CD8-positive, alpha-beta T cell (primary cell): ENCODE measurements at regions of chr6 and their contacts with region 1.

Region 1: DNA sequence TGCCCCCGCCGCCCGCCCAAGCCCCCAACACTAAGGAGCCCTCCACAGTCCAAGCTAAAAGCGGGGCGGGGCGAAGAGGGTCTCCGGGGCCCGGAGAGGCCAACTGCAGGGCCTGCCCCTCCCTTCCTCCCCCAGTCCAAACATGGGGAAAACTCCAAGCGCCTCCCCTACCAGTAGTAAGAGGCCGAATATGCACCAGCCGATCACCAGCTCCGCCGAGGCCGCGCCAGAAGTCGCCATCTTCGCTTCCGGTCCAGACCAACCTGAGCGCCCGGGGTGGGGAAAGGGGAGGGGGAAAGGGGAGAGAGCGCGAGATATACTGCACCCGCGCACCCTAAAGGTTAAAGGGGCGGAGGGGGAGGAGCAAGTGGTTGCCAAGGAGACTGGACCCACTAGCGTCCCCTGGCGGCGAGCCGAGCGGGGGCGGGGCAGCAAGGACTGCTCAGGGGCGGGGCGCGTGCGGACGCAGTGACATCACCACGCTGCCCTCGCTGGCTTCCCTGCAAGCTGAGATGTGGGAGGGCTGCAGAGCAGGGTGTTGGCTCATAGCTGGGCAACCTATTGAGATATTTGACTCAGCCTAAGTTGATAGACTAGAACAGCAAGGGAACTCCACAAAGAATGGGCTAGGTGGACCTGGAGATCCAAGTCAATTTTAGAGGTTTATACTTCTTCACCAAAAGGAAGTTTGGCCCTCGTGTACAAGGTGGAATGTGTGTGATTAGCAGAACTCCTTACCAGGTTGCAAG is at the start of gene LMBRD1:
- DNase-seq: peak; percentile 98 to 100 (median 99)
- ATAC-seq: peak; percentile 77
- H3K4me3 ChIP-seq: peak within 1 kb of the TSS; percentile 61 to 90
- H3K4me3 Mint-ChIP-seq: peak within 1 kb of the TSS; percentile 98
- H3K27ac ChIP-seq: peak within 1 kb of the TSS; percentile 92 to 93
- H3K27ac Mint-ChIP-seq: peak within 1 kb of the TSS; percentile 99
- H3K4me1 ChIP-seq: peaks cover 17% of the 10 kb centered on the region
- H3K4me1 Mint-ChIP-seq: peaks cover 56% of the 10 kb centered on the region
- H3K27me3 ChIP-seq: no peaks in the 10 kb centered on the region
- H3K27me3 Mint-ChIP-seq: no peaks in the 10 kb centered on the region
- CTCF ChIP-seq: peak; percentile 94
- total RNA-seq, gene LMBRD1: 39.2 to 40.3 TPM

Region 2: DNA sequence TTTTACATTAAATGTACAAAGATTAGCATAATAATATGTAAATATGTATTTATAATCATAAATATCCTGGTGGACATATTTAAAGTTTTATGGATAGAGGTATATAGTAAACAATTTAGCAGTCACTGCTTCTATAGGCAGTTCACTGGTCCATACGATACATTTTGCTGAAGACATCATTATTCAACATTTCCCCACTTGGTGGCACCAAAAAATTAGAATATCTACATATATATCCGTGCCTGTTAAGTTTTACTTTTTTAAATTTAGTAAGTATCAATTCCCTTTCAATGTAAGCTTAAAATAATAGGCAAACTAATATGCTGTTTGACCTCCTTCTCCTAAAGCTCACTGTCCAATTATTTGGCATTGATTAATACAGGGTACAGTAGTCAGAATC is 64.2 kb before region 1 on chr6:
- CTCF ChIA-PET with region 1: interaction called, 3 read pairs
- POLR2A ChIA-PET with region 1: no interaction called
- intact Hi-C with region 1: loop called in 1 of 2 experiments (anchors 5 kb)
- DNase-seq: peak in 2 of 9 experiments; percentile 15 to 30
- ATAC-seq: no peak
- H3K4me3 ChIP-seq: no peak overlapping the region
- H3K4me3 Mint-ChIP-seq: no peak overlapping the region
- H3K27ac ChIP-seq: no peak overlapping the region
- H3K27ac Mint-ChIP-seq: no peak overlapping the region
- H3K4me1 ChIP-seq: no peaks in the 10 kb centered on the region
- H3K4me1 Mint-ChIP-seq: no peaks in the 10 kb centered on the region
- H3K27me3 ChIP-seq: no peaks in the 10 kb centered on the region
- H3K27me3 Mint-ChIP-seq: no peaks in the 10 kb centered on the region
- CTCF ChIP-seq: peak; percentile 26

Region 3: DNA sequence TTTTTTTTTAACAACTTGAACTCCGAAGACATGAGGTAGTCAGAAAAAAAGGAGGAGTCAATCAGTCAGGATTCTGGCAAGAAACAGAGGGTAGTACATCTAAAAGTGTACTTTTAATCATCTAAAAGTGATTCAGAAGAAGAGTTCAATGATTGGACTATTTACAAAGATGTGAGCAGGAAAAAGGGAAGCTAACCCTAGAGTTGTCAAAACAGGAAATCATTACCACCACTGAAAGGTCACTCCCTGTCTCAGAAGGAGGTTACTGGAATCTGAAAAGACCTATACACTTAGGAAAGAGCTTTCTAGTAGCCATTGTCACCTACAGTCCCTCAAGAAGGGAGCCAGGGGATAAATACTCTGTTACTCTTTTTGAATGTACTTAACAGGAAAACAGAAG is 16.7 kb after region 1 on chr6:
- CTCF ChIA-PET with region 1: interaction called, 20 read pairs
- POLR2A ChIA-PET with region 1: interaction called, 13 read pairs
- intact Hi-C with region 1: loop called in 1 of 2 experiments (anchors 1 kb)
- DNase-seq: peak in 1 of 9 experiments; percentile 27
- ATAC-seq: no peak
- H3K4me3 ChIP-seq: no peak overlapping the region
- H3K4me3 Mint-ChIP-seq: peak overlapping the region; percentile 12
- H3K27ac ChIP-seq: peak overlapping the region in 1 of 2 experiments; percentile 55
- H3K27ac Mint-ChIP-seq: peak overlapping the region; percentile 87
- H3K4me1 ChIP-seq: peaks cover 45% of the 10 kb centered on the region
- H3K4me1 Mint-ChIP-seq: peaks cover 56% of the 10 kb centered on the region
- H3K27me3 ChIP-seq: no peaks in the 10 kb centered on the region
- H3K27me3 Mint-ChIP-seq: no peaks in the 10 kb centered on the region
- CTCF ChIP-seq: no peak

Region 4: DNA sequence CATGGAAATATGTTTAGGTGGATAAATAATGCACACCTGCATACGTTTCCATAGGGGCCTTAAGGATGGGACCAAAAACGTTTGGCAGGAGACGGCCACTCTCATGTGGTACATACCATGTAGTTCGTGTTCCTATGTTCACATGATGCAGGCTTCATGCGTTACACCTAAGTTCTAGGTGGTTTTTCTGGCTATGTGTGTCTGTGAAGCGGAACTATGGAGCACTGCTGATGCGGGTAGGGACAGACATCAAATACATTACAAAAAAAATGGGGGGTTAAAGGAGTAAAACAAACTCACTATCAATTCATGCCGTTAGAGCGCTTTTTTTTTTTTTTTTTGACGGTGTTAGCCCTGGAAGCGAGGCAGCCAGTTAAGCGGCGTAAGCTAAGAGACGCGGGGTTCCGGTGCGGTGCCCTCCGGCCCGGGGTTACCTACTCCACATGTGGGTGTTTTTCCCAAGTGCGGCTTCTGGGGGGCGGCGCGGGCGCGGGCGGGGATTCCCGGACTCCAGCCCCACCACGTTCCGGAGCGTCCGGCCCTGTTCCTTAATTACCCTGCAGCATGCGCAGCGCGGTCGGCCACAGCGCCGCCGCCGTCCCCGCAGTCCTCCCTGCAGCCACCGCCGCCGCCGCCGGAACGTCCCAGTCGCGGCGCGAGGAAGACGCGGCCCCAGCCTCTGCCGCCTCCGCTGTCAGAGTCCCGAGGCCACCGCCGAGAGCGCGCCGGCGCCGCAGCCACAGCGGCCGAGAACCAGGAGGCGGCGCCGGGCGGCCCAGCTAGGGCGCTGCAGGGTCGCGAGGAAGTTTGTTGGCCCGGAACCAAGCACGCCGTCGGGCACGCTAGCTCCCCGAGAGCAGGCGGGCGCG is 70.2 kb after region 1 on chr6:
- CTCF ChIA-PET with region 1: interaction called, 5 read pairs
- POLR2A ChIA-PET with region 1: interaction called, 3 read pairs
- intact Hi-C with region 1: loop called (anchors 1 to 5 kb)
- DNase-seq: peak; percentile 33 to 81 (median 59)
- ATAC-seq: peak; percentile 75
- H3K4me3 ChIP-seq: peak overlapping the region; percentile 48 to 55
- H3K4me3 Mint-ChIP-seq: peak overlapping the region; percentile 81
- H3K27ac ChIP-seq: no peak overlapping the region
- H3K27ac Mint-ChIP-seq: peak overlapping the region; percentile 65
- H3K4me1 ChIP-seq: peaks cover 8% of the 10 kb centered on the region
- H3K4me1 Mint-ChIP-seq: peaks cover 18% of the 10 kb centered on the region
- H3K27me3 ChIP-seq: peaks cover 0 to 2% of the 10 kb centered on the region in 2 experiments
- H3K27me3 Mint-ChIP-seq: peaks cover 18% of the 10 kb centered on the region
- CTCF ChIP-seq: no peak

Region 5: GRCh38 chr6:69933239-69933638 is 136.4 kb after region 1 on chr6:
- CTCF ChIA-PET with region 1: no interaction called
- POLR2A ChIA-PET with region 1: no interaction called
- intact Hi-C with region 1: no loop called
- DNase-seq: no peak
- ATAC-seq: no peak
- H3K4me3 ChIP-seq: no peak overlapping the region
- H3K4me3 Mint-ChIP-seq: no peak overlapping the region
- H3K27ac ChIP-seq: no peak overlapping the region
- H3K27ac Mint-ChIP-seq: no peak overlapping the region
- H3K4me1 ChIP-seq: no peaks in the 10 kb centered on the region
- H3K4me1 Mint-ChIP-seq: no peaks in the 10 kb centered on the region
- H3K27me3 ChIP-seq: no peaks in the 10 kb centered on the region
- H3K27me3 Mint-ChIP-seq: peaks cover 6% of the 10 kb centered on the region
- CTCF ChIP-seq: no peak

Region 6: DNA sequence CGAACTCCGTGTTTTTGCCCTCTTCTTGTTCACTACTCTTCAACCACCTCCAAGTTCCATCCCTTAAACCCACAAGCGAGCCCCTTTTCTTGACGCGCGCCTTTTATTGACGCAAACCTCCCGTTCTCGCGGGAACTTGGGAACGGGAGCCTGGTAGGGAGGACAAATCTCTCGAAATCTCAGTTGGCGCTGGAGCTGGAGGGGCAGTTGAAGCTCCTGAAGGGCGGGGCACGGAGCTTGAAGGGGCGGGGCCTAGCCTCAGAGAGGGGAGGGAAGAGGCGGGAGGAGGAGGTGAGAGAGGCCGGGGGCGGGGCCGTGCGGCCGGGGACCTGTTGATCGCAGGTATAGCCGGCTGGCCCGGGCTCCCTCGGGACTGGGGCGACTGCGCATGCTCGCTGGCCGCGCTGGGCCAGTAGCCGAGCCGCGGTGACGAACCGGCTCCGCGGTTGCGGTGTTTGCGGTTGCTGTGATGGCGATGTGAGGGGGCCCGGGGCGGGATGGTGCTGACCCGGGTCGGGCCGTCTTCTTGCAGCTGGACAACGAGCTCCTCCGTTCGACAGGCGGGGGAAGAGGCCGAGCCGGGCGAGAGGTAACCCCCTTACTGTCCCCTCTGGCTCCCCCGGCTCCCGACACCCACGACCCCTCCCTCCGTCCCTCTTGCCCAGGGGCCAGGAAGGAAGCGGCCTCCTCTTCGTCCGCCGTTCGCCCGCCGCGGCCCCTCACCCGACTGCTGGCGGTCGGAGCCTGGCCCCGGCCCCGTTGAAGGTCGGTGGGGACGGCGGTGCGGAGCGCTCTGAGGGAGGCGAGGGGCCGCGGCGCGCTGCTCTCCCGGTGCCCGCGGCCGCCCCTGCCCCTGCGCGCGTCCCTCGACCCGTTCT is 616.5 kb after region 1 on chr6 and contains the start of gene FAM135A:
- CTCF ChIA-PET with region 1: no interaction called
- POLR2A ChIA-PET with region 1: no interaction called
- intact Hi-C with region 1: loop called (anchors 1 to 5 kb)
- DNase-seq: peak; percentile 85 to 96 (median 93)
- ATAC-seq: peak; percentile 96
- H3K4me3 ChIP-seq: peak within 1 kb of the TSS; percentile 65 to 72
- H3K4me3 Mint-ChIP-seq: peak within 1 kb of the TSS; percentile 91
- H3K27ac ChIP-seq: peak within 1 kb of the TSS; percentile 47 to 63
- H3K27ac Mint-ChIP-seq: peak within 1 kb of the TSS; percentile 91
- H3K4me1 ChIP-seq: peaks cover 8% of the 10 kb centered on the region
- H3K4me1 Mint-ChIP-seq: peaks cover 24% of the 10 kb centered on the region
- H3K27me3 ChIP-seq: no peaks in the 10 kb centered on the region
- H3K27me3 Mint-ChIP-seq: no peaks in the 10 kb centered on the region
- CTCF ChIP-seq: no peak
- total RNA-seq, gene FAM135A: 5.8 to 6.5 TPM

Region 7: GRCh38 chr6:70566751-70567382 is 770.1 kb after region 1 on chr6 and contains the start of gene SDHAF4:
- CTCF ChIA-PET with region 1: no interaction called
- POLR2A ChIA-PET with region 1: no interaction called
- intact Hi-C with region 1: loop called in 1 of 2 experiments (anchors 10 kb)
- DNase-seq: peak; percentile 90 to 96 (median 95)
- ATAC-seq: peak; percentile 99
- H3K4me3 ChIP-seq: peak within 1 kb of the TSS; percentile 89 to 93
- H3K4me3 Mint-ChIP-seq: peak within 1 kb of the TSS; percentile 87
- H3K27ac ChIP-seq: peak within 1 kb of the TSS; percentile 61 to 82
- H3K27ac Mint-ChIP-seq: peak within 1 kb of the TSS; percentile 92
- H3K4me1 ChIP-seq: peaks cover 13% of the 10 kb centered on the region
- H3K4me1 Mint-ChIP-seq: peaks cover 24% of the 10 kb centered on the region
- H3K27me3 ChIP-seq: no peaks in the 10 kb centered on the region
- H3K27me3 Mint-ChIP-seq: no peaks in the 10 kb centered on the region
- CTCF ChIP-seq: no peak
- total RNA-seq, gene SDHAF4: 1.4 to 1.7 TPM

Region 8: GRCh38 chr6:70667711-70668498 is 871.1 kb after region 1 on chr6 and contains the start of gene SMAP1:
- CTCF ChIA-PET with region 1: no interaction called
- POLR2A ChIA-PET with region 1: no interaction called
- intact Hi-C with region 1: loop called (anchors 1 to 5 kb)
- DNase-seq: peak; percentile 79 to 97 (median 93)
- ATAC-seq: peak; percentile 91
- H3K4me3 ChIP-seq: peak within 1 kb of the TSS; percentile 76 to 87
- H3K4me3 Mint-ChIP-seq: peak within 1 kb of the TSS; percentile 90
- H3K27ac ChIP-seq: peak within 1 kb of the TSS; percentile 53 to 75
- H3K27ac Mint-ChIP-seq: peak within 1 kb of the TSS; percentile 92
- H3K4me1 ChIP-seq: peaks cover 39% of the 10 kb centered on the region
- H3K4me1 Mint-ChIP-seq: peaks cover 53% of the 10 kb centered on the region
- H3K27me3 ChIP-seq: no peaks in the 10 kb centered on the region
- H3K27me3 Mint-ChIP-seq: no peaks in the 10 kb centered on the region
- CTCF ChIP-seq: no peak
- total RNA-seq, gene SMAP1: 21.2 to 21.8 TPM

Region 9: GRCh38 chr6:70680396-70680795 is 883.6 kb after region 1 on chr6:
- CTCF ChIA-PET with region 1: no interaction called
- POLR2A ChIA-PET with region 1: no interaction called
- intact Hi-C with region 1: no loop called
- DNase-seq: no peak
- ATAC-seq: no peak
- H3K4me3 ChIP-seq: no peak overlapping the region
- H3K4me3 Mint-ChIP-seq: no peak overlapping the region
- H3K27ac ChIP-seq: no peak overlapping the region
- H3K27ac Mint-ChIP-seq: no peak overlapping the region
- H3K4me1 ChIP-seq: peaks cover 8% of the 10 kb centered on the region
- H3K4me1 Mint-ChIP-seq: peaks cover 54% of the 10 kb centered on the region
- H3K27me3 ChIP-seq: no peaks in the 10 kb centered on the region
- H3K27me3 Mint-ChIP-seq: no peaks in the 10 kb centered on the region
- CTCF ChIP-seq: no peak